ENCODE measurements at regions of chr1 and their contacts with region 1.

Region 1: GRCh38 chr1:26363549-26364448 is 8.8 kb downstream of the ZNF683 start:
- DNase-seq: peak; percentile 87
- H3K4me3 Mint-ChIP-seq: no peak overlapping the region
- H3K27ac Mint-ChIP-seq: peak overlapping the region; percentile 39
- H3K4me1 Mint-ChIP-seq: peaks cover 53% of the 10 kb centered on the region
- H3K27me3 Mint-ChIP-seq: peaks cover 41% of the 10 kb centered on the region

Region 2: GRCh38 chr1:26254404-26254803 is 109.4 kb before region 1 on chr1:
- CTCF ChIA-PET with region 1: no interaction called
- POLR2A ChIA-PET with region 1: no interaction called
- DNase-seq: no peak
- H3K4me3 Mint-ChIP-seq: no peak overlapping the region
- H3K27ac Mint-ChIP-seq: peak overlapping the region; percentile 17
- H3K4me1 Mint-ChIP-seq: peaks cover 3% of the 10 kb centered on the region
- H3K27me3 Mint-ChIP-seq: no peaks in the 10 kb centered on the region

Region 3: GRCh38 chr1:26351591-26352337 is 12.0 kb before region 1 on chr1:
- CTCF ChIA-PET with region 1: interaction called, 15 read pairs
- POLR2A ChIA-PET with region 1: no interaction called
- DNase-seq: no peak
- H3K4me3 Mint-ChIP-seq: no peak overlapping the region
- H3K27ac Mint-ChIP-seq: no peak overlapping the region
- H3K4me1 Mint-ChIP-seq: peaks cover 5% of the 10 kb centered on the region
- H3K27me3 Mint-ChIP-seq: no peaks in the 10 kb centered on the region

Region 4: GRCh38 chr1:26378088-26378878 is 14.5 kb after region 1 on chr1:
- CTCF ChIA-PET with region 1: interaction called, 33 read pairs
- POLR2A ChIA-PET with region 1: no interaction called
- DNase-seq: peak; percentile 88
- H3K4me3 Mint-ChIP-seq: peak overlapping the region; percentile 30
- H3K27ac Mint-ChIP-seq: peak overlapping the region; percentile 88
- H3K4me1 Mint-ChIP-seq: peaks cover 80% of the 10 kb centered on the region
- H3K27me3 Mint-ChIP-seq: no peaks in the 10 kb centered on the region

Measured in activated CD4-positive, alpha-beta T cell treated with anti-CD3 and anti-CD28 coated beads, Interleukin-2, amount 10 ng/mL, durations not matched to agents 7 days and 5 days (primary cell).